ENCODE measurements at regions of chr22 and their contacts with region 1.

Region 1: GRCh38 chr22:39685336-39686177 is 115.0 kb downstream of the CACNA1I start:
- DNase-seq: no peak
- H3K4me3 ChIP-seq: no peak overlapping the region
- H3K4me3 Mint-ChIP-seq: no peak overlapping the region
- H3K27ac ChIP-seq: no peak overlapping the region
- H3K27ac Mint-ChIP-seq: no peak overlapping the region
- H3K4me1 ChIP-seq: no peaks in the 10 kb centered on the region
- H3K4me1 Mint-ChIP-seq: peaks cover 0 to 7% (median 5%) of the 10 kb centered on the region in 4 donors
- H3K27me3 ChIP-seq: no peaks in the 10 kb centered on the region
- H3K27me3 Mint-ChIP-seq: no peaks in the 10 kb centered on the region

Region 2: DNA sequence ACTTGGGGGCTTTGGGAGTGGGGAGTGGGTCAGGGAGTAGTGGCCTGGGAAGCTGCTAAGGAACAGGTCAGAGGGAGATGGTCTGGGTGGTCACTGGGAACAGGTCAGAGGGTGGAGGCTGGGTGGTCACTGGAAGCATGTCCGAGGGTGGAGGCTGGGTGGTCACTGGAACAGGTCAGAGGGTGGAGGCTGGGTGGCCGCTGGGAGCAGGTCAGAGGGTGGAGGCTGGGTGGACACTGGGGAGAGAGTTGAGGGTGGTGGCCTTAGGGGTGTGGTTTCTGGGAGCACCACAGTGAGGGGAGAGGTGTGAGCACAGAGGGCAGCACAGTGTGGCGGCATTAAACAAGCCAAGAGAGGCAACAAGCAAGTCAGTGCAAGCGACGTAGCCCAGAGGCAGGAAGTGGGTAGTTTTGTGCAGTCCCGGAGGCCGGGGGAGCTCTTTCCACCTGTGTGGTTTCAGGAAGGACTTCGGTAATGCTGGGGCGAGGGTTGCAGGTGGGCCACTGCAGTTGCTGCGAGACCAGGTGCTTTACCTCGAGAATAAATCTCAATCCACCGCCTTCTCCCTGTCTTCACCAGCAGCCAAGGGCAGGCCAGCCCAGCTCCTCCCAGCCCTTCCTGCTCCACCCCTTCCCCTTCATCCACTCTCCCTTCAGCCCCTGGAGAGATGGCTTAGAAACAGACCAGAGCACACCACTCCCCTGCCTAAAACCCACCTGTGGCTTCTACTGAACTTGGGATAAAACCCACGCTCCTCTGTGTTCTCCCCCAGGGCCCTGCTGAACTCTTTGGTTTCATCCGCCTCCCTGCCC is 118.2 kb before region 1 on chr22:
- CTCF ChIA-PET with region 1: no interaction called
- POLR2A ChIA-PET with region 1: interaction called, 5 read pairs
- intact Hi-C with region 1: loop called (anchors 5 kb)
- DNase-seq: peak; percentile 43 to 58 (median 52)
- H3K4me3 ChIP-seq: peak overlapping the region in 1 of 2 donors; percentile 3
- H3K4me3 Mint-ChIP-seq: peak overlapping the region; percentile 47 to 68 (median 50)
- H3K27ac ChIP-seq: no peak overlapping the region
- H3K27ac Mint-ChIP-seq: peak overlapping the region; percentile 54 to 91 (median 83)
- H3K4me1 ChIP-seq: peaks cover 14% of the 10 kb centered on the region
- H3K4me1 Mint-ChIP-seq: peaks cover 16 to 23% (median 18%) of the 10 kb centered on the region in 4 donors
- H3K27me3 ChIP-seq: no peaks in the 10 kb centered on the region
- H3K27me3 Mint-ChIP-seq: no peaks in the 10 kb centered on the region

Region 3: GRCh38 chr22:39703928-39704639 is 18.5 kb after region 1 on chr22:
- CTCF ChIA-PET with region 1: no interaction called
- POLR2A ChIA-PET with region 1: no interaction called
- intact Hi-C with region 1: no loop called
- DNase-seq: no peak
- H3K4me3 ChIP-seq: no peak overlapping the region
- H3K4me3 Mint-ChIP-seq: no peak overlapping the region
- H3K27ac ChIP-seq: no peak overlapping the region
- H3K27ac Mint-ChIP-seq: peak overlapping the region in 1 of 7 donors; percentile 79
- H3K4me1 ChIP-seq: no peaks in the 10 kb centered on the region
- H3K4me1 Mint-ChIP-seq: no peaks in the 10 kb centered on the region
- H3K27me3 ChIP-seq: no peaks in the 10 kb centered on the region
- H3K27me3 Mint-ChIP-seq: no peaks in the 10 kb centered on the region

Measured in CD4-positive, alpha-beta memory T cell (primary cell).